GM13977 (cell line): ENCODE measurements at regions of chrX and their contacts with region 1.

Region 1: GRCh38 chrX:46554942-46555341 is 9.7 kb upstream of the ZNF674 start:
- DNase-seq: no peak
- CTCF ChIP-seq: peak; percentile 16

Region 2: GRCh38 chrX:46637937-46638336 is 83.0 kb after region 1 on chrX:
- in situ Hi-C with region 1: loop called (anchors 10 kb)
- DNase-seq: peak; percentile 38
- CTCF ChIP-seq: no peak